Adrenal gland (tissue), 19 donors: ENCODE measurements at regions of chr9 and their contacts with region 1.

Region 1: GRCh38 chr9:133485361-133486260 is 6.7 kb upstream of the SLC2A6 start:
- DNase-seq: no peak
- H3K4me3 ChIP-seq: no peak overlapping the region
- H3K27ac ChIP-seq: no peak overlapping the region
- H3K4me1 ChIP-seq: peaks cover 0 to 4% of the 10 kb centered on the region in 2 donors
- H3K27me3 ChIP-seq: no peaks in the 10 kb centered on the region
- CTCF ChIP-seq: no peak
- POLR2A ChIP-seq: no peak

Region 2: GRCh38 chr9:133023117-133023890 is 462.3 kb before region 1 on chr9:
- intact Hi-C with region 1: loop called in 1 of 2 experiments (anchors 10 kb)
- DNase-seq: peak in 2 of 7 donors; percentile 17 to 18
- H3K4me3 ChIP-seq: no peak overlapping the region
- H3K27ac ChIP-seq: no peak overlapping the region
- H3K4me1 ChIP-seq: no peaks in the 10 kb centered on the region
- H3K27me3 ChIP-seq: no peaks in the 10 kb centered on the region
- CTCF ChIP-seq: no peak
- POLR2A ChIP-seq: no peak

Region 3: GRCh38 chr9:133160742-133161546 is 324.7 kb before region 1 on chr9:
- intact Hi-C with region 1: no loop called
- DNase-seq: peak; percentile 70 to 94 (median 83)
- H3K4me3 ChIP-seq: no peak overlapping the region
- H3K27ac ChIP-seq: peak overlapping the region in 4 of 5 donors; percentile 21 to 76 (median 72)
- H3K4me1 ChIP-seq: peaks cover 15 to 26% of the 10 kb centered on the region in 2 donors
- H3K27me3 ChIP-seq: no peaks in the 10 kb centered on the region
- CTCF ChIP-seq: peak; percentile 69 to 91 (median 87)
- POLR2A ChIP-seq: peak in 1 of 2 donors; percentile 40

Region 4: GRCh38 chr9:133356391-133357091 is 129.1 kb before region 1 on chr9 and contains the starts of genes SURF1 and SURF2:
- intact Hi-C with region 1: loop called (anchors 10 kb)
- DNase-seq: peak; percentile 85 to 93 (median 88)
- H3K4me3 ChIP-seq: peak within 1 kb of the TSS in 3 of 4 donors; percentile 44 to 74 (median 66)
- H3K27ac ChIP-seq: peak within 1 kb of the TSS in 4 of 5 donors; percentile 0 to 85 (median 57)
- H3K4me1 ChIP-seq: peaks cover 11 to 38% of the 10 kb centered on the region in 2 donors
- H3K27me3 ChIP-seq: no peaks in the 10 kb centered on the region
- CTCF ChIP-seq: no peak
- POLR2A ChIP-seq: peak in 1 of 2 donors; percentile 63
- total RNA-seq, gene SURF1: 50.9 to 111 (median 71.5) TPM
- total RNA-seq, gene SURF2: 13.4 to 29.2 (median 20.8) TPM

Region 5: DNA sequence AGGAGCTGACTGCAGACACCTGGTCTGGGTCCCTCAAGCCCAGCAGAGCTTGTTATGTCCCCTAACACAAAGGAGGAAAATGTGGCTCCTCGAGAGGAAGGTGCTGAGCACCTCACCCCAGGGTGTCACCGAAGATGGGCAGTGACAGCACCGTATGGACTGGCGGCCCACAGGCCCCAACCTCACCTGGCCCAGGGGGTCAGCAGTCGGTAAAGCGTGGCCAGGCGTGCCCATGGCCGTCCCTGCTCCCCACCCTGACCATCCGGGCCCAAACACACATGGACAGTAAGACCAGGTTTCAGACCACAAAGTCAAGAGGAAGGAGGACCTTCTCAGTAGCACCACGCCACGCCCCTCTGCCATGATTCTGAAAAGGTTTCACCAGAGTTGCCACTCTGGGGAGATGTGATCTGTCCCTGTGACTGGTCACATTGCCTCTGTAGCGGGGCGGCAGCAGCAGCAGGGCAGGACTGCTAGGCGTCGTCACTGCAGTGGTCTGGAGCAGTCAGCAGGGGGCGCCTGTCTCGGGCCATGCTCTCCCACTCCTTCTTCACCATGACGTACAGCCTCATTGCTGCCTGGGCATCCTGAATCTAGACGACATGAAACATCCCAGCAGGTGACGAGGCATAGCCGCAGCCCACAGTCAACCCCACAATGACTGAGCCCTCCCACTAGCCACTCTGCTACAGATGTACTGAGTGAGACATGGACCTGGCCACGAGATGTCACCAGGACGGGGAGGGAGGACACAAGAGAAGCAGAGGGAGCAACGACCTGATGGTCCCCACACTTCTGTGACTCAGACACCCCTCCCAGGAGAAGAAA is 78.9 kb before region 1 on chr9:
- intact Hi-C with region 1: loop called in 1 of 2 experiments (anchors 5 kb)
- DNase-seq: peak; percentile 69 to 90 (median 79)
- H3K4me3 ChIP-seq: no peak overlapping the region
- H3K27ac ChIP-seq: peak overlapping the region in 3 of 5 donors; percentile 44 to 74 (median 70)
- H3K4me1 ChIP-seq: peaks cover 10 to 29% of the 10 kb centered on the region in 2 donors
- H3K27me3 ChIP-seq: no peaks in the 10 kb centered on the region
- CTCF ChIP-seq: peak; percentile 67 to 90 (median 80)
- POLR2A ChIP-seq: no peak